SK-N-SH (cell line): ENCODE measurements at regions of chr12 and their contacts with region 1.

Region 1: GRCh38 chr12:90854136-90854689 is 100.8 kb downstream of the CCER1 start:
- DNase-seq: peak; percentile 43
- H3K4me3 ChIP-seq: peak overlapping the region in 1 of 2 experiments; percentile 25; a peak in 1 of 4 replicates
- H3K27ac ChIP-seq: peak overlapping the region in 1 of 2 experiments; percentile 40; a peak in 2 of 4 replicates
- H3K4me1 ChIP-seq: peaks cover 0 to 7% of the 10 kb centered on the region in 2 experiments; a peak in 2 of 4 replicates
- H3K27me3 ChIP-seq: no peaks in the 10 kb centered on the region
- CTCF ChIP-seq: peak; percentile 82
- EP300 ChIP-seq: no peak
- RAD21 ChIP-seq: peak; percentile 84

Region 2: DNA sequence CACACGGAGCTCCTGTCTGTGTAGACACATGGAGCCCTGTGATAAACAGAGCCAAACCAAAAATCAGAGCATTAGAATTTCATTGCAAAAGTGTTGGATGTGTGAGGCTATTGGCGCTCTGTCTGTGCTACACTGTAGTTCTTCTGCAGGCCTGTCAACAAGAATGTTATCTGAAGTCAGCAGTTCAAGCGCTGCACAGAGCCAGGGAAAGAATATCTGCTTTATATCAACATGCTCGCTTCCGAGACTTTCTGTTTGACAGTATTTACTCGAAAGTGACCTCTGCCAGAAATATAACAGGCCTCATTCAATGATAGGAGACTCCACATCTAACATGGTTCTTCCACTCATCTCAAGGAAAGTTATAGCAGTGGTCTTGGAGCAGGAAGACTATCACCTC is 17.5 kb before region 1 on chr12:
- CTCF ChIA-PET with region 1: interaction called, 17 read pairs
- POLR2A ChIA-PET with region 1: no interaction called
- DNase-seq: peak; percentile 67
- H3K4me3 ChIP-seq: no peak overlapping the region
- H3K27ac ChIP-seq: peak overlapping the region in 1 of 2 experiments; percentile 96; a peak in 2 of 4 replicates
- H3K4me1 ChIP-seq: peaks cover 0 to 25% of the 10 kb centered on the region in 2 experiments; a peak in 2 of 4 replicates
- H3K27me3 ChIP-seq: no peaks in the 10 kb centered on the region
- CTCF ChIP-seq: no peak
- EP300 ChIP-seq: peak in 1 of 2 experiments; percentile 94; a peak in 2 of 4 replicates
- RAD21 ChIP-seq: peak; percentile 36

Region 3: GRCh38 chr12:90842477-90842876 is 11.7 kb before region 1 on chr12:
- CTCF ChIA-PET with region 1: interaction called, 17 read pairs
- POLR2A ChIA-PET with region 1: interaction called, 5 read pairs
- DNase-seq: no peak
- H3K4me3 ChIP-seq: no peak overlapping the region
- H3K27ac ChIP-seq: peak overlapping the region in 1 of 2 experiments; percentile 62; a peak in 1 of 4 replicates
- H3K4me1 ChIP-seq: no peaks in the 10 kb centered on the region; a peak in 2 of 4 replicates
- H3K27me3 ChIP-seq: no peaks in the 10 kb centered on the region
- CTCF ChIP-seq: no peak
- EP300 ChIP-seq: no peak
- RAD21 ChIP-seq: no peak

Region 4: GRCh38 chr12:90870971-90871725 is 16.9 kb after region 1 on chr12:
- CTCF ChIA-PET with region 1: interaction called, 12 read pairs
- POLR2A ChIA-PET with region 1: no interaction called
- DNase-seq: no peak
- H3K4me3 ChIP-seq: no peak overlapping the region
- H3K27ac ChIP-seq: peak overlapping the region in 1 of 2 experiments; percentile 11; a peak in 2 of 4 replicates
- H3K4me1 ChIP-seq: no peaks in the 10 kb centered on the region; a peak in 1 of 4 replicates
- H3K27me3 ChIP-seq: no peaks in the 10 kb centered on the region
- CTCF ChIP-seq: no peak
- EP300 ChIP-seq: no peak
- RAD21 ChIP-seq: no peak

Region 5: GRCh38 chr12:90940872-90941499 is 86.8 kb after region 1 on chr12:
- CTCF ChIA-PET with region 1: interaction called, 10 read pairs
- POLR2A ChIA-PET with region 1: no interaction called
- DNase-seq: peak; percentile 32
- H3K4me3 ChIP-seq: no peak overlapping the region
- H3K27ac ChIP-seq: no peak overlapping the region
- H3K4me1 ChIP-seq: peaks cover 0 to 15% of the 10 kb centered on the region in 2 experiments; a peak in 3 of 4 replicates
- H3K27me3 ChIP-seq: no peaks in the 10 kb centered on the region
- CTCF ChIP-seq: peak; percentile 84
- EP300 ChIP-seq: no peak
- RAD21 ChIP-seq: peak; percentile 81

Region 6: DNA sequence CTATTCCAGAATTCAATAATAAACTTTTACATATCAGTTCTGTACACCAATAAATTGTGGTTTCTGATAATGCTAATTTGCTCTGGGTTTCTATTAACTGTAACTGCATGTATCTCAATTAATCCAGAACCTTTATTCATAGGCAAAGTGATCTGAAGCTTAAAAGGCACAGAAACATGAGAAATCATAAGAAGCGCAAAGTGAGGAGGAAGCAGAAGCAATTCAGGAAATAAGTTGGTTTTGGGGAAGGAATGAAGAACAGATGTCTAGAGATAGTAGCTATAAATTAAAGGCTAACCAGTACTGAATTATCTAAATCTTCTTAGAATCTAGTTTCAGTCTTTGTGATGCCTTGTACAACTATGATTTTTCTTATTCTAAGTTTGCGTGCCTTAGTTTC is 179.0 kb after region 1 on chr12:
- CTCF ChIA-PET with region 1: no interaction called
- POLR2A ChIA-PET with region 1: no interaction called
- DNase-seq: no peak
- H3K4me3 ChIP-seq: no peak overlapping the region
- H3K27ac ChIP-seq: no peak overlapping the region
- H3K4me1 ChIP-seq: peaks cover 0 to 6% of the 10 kb centered on the region in 2 experiments; a peak in 1 of 4 replicates
- H3K27me3 ChIP-seq: no peaks in the 10 kb centered on the region
- CTCF ChIP-seq: no peak
- EP300 ChIP-seq: no peak
- RAD21 ChIP-seq: no peak